ENCODE measurements at regions of chr18 and their contacts with region 1.

Region 1: GRCh38 chr18:63339920-63340484 is 20.4 kb upstream of the BCL2 start:
- DNase-seq: no peak
- H3K4me3 ChIP-seq: no peak overlapping the region
- H3K27ac ChIP-seq: no peak overlapping the region
- H3K4me1 ChIP-seq: peaks cover under 1 to 7% (median 3%) of the 10 kb centered on the region in 4 donors
- H3K27me3 ChIP-seq: no peaks in the 10 kb centered on the region
- CTCF ChIP-seq: peak; percentile 36 to 53 (median 40)
- EP300 ChIP-seq: no peak
- POLR2A ChIP-seq: no peak

Region 2: DNA sequence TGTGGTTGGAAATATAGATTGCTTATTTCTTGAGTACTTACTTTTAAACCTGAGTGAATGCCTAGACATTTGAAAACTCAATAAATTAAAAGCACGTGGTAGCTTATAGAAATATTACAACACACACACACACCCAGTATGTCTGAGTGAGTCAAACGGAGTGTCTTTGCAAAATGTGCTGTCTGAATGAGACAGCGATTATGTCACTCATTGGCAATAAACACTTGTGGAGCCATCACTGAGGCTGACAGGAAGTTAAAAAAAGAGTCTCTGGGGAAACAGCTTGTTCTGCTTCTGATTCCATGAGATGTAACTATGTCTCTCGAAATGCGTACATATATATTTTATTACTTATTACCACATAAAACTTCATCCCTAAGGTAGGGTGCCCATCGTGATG is 104.6 kb after region 1 on chr18:
- intact Hi-C with region 1: loop called (anchors 5 kb)
- DNase-seq: peak; percentile 85
- H3K4me3 ChIP-seq: no peak overlapping the region
- H3K27ac ChIP-seq: peak overlapping the region; percentile 23 to 56 (median 31)
- H3K4me1 ChIP-seq: peaks cover 0 to 4% (median 0%) of the 10 kb centered on the region in 4 donors
- H3K27me3 ChIP-seq: no peaks in the 10 kb centered on the region
- CTCF ChIP-seq: no peak
- EP300 ChIP-seq: no peak
- POLR2A ChIP-seq: no peak

Region 3: GRCh38 chr18:63487676-63488075 is 147.7 kb after region 1 on chr18:
- intact Hi-C with region 1: no loop called
- DNase-seq: no peak
- H3K4me3 ChIP-seq: no peak overlapping the region
- H3K27ac ChIP-seq: no peak overlapping the region
- H3K4me1 ChIP-seq: peaks cover 0 to 19% (median 8%) of the 10 kb centered on the region in 4 donors
- H3K27me3 ChIP-seq: no peaks in the 10 kb centered on the region
- CTCF ChIP-seq: no peak
- EP300 ChIP-seq: no peak
- POLR2A ChIP-seq: no peak